Endothelial cell of umbilical vein (primary cell): ENCODE measurements at regions of chr2 and their contacts with region 1.

Region 1: GRCh38 chr2:234544659-234545611 is 48.1 kb upstream of the ARL4C start:
- DNase-seq: peak; percentile 38
- H3K4me3 ChIP-seq: no peak overlapping the region
- H3K27ac ChIP-seq: no peak overlapping the region
- H3K4me1 ChIP-seq: peaks cover 6% of the 10 kb centered on the region
- H3K27me3 ChIP-seq: peaks cover 0 to 6% of the 10 kb centered on the region in 2 experiments
- CTCF ChIP-seq: peak; percentile 71 to 96
- POLR2A ChIP-seq: no peak

Region 2: DNA sequence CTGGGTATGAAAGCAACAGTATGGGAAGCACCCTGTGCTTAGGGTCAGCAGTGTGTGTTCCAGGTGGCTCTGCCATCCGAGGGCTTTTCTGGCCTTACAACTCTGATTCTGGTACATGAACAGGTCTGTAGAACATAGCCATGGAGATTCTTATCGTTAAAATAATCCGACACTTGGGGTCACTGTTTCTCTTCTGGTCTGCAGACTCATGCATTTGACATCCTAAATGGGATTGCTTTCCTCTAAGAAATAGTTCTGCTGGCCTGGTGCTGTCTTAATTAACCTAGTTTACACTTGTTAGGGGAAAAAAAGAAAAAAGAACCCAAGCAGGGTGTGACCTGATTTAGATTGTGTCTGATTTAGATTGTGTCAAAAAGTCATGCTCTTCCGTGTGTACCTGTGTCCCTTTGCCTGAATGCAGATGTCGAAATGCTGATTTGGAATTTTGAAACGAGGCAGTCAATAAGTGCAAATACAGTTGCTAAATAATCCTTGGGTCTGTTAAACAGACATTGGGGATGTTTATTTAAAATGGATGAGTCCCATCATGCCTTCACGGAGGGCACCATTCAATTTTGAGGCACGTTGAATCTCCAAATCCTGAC is 568.1 kb before region 1 on chr2:
- CTCF ChIA-PET with region 1: interaction called, 74 read pairs
- POLR2A ChIA-PET with region 1: no interaction called
- dilution Hi-C with region 1: no loop called
- intact Hi-C with region 1: loop called (anchors 1 kb)
- DNase-seq: peak; percentile 57
- H3K4me3 ChIP-seq: no peak overlapping the region
- H3K27ac ChIP-seq: no peak overlapping the region
- H3K4me1 ChIP-seq: peaks cover 13% of the 10 kb centered on the region
- H3K27me3 ChIP-seq: peaks cover 0 to 3% of the 10 kb centered on the region in 2 experiments
- CTCF ChIP-seq: peak; percentile 4 to 22
- POLR2A ChIP-seq: no peak

Region 3: GRCh38 chr2:234003972-234004617 is 540.8 kb before region 1 on chr2:
- CTCF ChIA-PET with region 1: no interaction called
- POLR2A ChIA-PET with region 1: no interaction called
- dilution Hi-C with region 1: no loop called
- intact Hi-C with region 1: no loop called
- DNase-seq: peak; percentile 8
- H3K4me3 ChIP-seq: no peak overlapping the region
- H3K27ac ChIP-seq: no peak overlapping the region
- H3K4me1 ChIP-seq: no peaks in the 10 kb centered on the region
- H3K27me3 ChIP-seq: peaks cover 0 to 8% of the 10 kb centered on the region in 2 experiments
- CTCF ChIP-seq: no peak
- POLR2A ChIP-seq: no peak

Region 4: GRCh38 chr2:234500394-234501006 is 44.4 kb before region 1 on chr2:
- CTCF ChIA-PET with region 1: interaction called, 24 read pairs
- POLR2A ChIA-PET with region 1: no interaction called
- dilution Hi-C with region 1: no loop called
- intact Hi-C with region 1: loop called (anchors 1 kb)
- DNase-seq: peak; percentile 61
- H3K4me3 ChIP-seq: no peak overlapping the region
- H3K27ac ChIP-seq: no peak overlapping the region
- H3K4me1 ChIP-seq: peaks cover 3% of the 10 kb centered on the region
- H3K27me3 ChIP-seq: peaks cover 0 to 2% of the 10 kb centered on the region in 2 experiments
- CTCF ChIP-seq: peak; percentile 51 to 58
- POLR2A ChIP-seq: no peak

Region 5: DNA sequence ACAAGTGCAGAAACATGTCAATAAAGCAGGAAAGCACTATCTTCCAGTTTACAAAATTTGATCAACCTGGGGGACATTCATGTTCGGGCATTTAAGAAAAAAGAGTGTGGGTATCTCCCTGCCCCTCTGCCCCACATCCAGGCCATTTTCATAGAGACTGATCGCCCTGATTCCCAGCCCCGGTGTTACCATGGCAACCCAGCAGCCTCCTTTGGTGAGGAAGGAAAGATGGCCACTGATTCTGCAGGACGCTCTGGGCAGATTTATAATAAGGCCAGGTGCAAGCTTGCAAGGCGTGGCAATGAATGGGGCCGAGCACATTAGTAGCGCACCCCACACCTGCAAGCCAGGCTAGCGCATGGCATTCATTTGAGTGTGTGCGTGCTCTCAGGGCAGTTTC is 11.3 kb before region 1 on chr2:
- CTCF ChIA-PET with region 1: interaction called, 24 read pairs
- POLR2A ChIA-PET with region 1: no interaction called
- dilution Hi-C with region 1: no loop called
- intact Hi-C with region 1: no loop called
- DNase-seq: no peak
- H3K4me3 ChIP-seq: no peak overlapping the region
- H3K27ac ChIP-seq: no peak overlapping the region
- H3K4me1 ChIP-seq: no peaks in the 10 kb centered on the region
- H3K27me3 ChIP-seq: peaks cover 2 to 3% of the 10 kb centered on the region in 2 experiments
- CTCF ChIP-seq: no peak
- POLR2A ChIP-seq: no peak

Region 6: DNA sequence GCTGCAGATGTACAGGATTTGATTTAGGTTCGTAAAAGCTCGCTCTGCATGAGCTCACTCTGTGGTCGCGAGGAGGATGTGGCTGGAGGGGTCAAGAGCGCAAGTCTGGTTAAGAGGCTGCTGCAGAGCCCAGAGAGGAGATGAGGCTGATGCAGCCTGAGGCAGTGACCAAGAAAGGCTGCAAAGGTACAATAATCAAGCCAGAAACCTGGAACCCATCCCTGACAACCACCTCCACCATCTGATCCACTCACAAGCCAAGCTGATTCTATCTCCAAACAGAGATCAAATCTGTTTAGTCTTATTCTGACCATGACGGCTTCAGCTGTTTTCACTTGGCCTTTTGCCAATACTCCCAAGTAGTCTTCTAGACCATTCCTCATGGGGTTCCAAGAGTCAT is 10.8 kb after region 1 on chr2:
- CTCF ChIA-PET with region 1: interaction called, 16 read pairs
- POLR2A ChIA-PET with region 1: no interaction called
- dilution Hi-C with region 1: no loop called
- intact Hi-C with region 1: no loop called
- DNase-seq: no peak
- H3K4me3 ChIP-seq: no peak overlapping the region
- H3K27ac ChIP-seq: no peak overlapping the region
- H3K4me1 ChIP-seq: no peaks in the 10 kb centered on the region
- H3K27me3 ChIP-seq: no peaks in the 10 kb centered on the region
- CTCF ChIP-seq: no peak
- POLR2A ChIP-seq: no peak

Region 7: DNA sequence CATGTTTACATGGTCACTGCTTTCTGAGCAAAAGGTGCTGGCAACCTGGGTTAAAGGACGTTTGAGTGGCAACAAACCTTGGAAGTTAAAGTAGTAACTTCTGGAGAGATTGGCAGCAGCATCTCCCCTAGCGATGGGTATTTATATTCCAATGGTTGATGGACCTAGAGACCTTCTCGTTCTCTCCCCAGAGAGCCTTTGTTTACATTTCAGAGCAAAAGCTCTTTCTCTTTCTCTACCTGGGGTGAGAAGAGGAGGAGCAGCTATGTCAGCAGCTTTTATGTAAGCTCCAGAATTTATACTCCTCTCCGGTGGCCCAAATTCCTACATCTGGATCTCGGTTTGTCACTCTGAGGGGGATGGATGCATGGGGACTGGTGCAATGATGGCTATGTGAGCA is 165.7 kb after region 1 on chr2:
- CTCF ChIA-PET with region 1: no interaction called
- POLR2A ChIA-PET with region 1: no interaction called
- dilution Hi-C with region 1: no loop called
- intact Hi-C with region 1: no loop called
- DNase-seq: no peak
- H3K4me3 ChIP-seq: no peak overlapping the region
- H3K27ac ChIP-seq: no peak overlapping the region
- H3K4me1 ChIP-seq: no peaks in the 10 kb centered on the region
- H3K27me3 ChIP-seq: peaks cover 0 to 18% of the 10 kb centered on the region in 2 experiments
- CTCF ChIP-seq: no peak
- POLR2A ChIP-seq: no peak

Region 8: GRCh38 chr2:235098736-235099494 is 554.0 kb after region 1 on chr2:
- CTCF ChIA-PET with region 1: interaction called, 13 read pairs
- POLR2A ChIA-PET with region 1: no interaction called
- dilution Hi-C with region 1: loop called (anchors 25 kb)
- intact Hi-C with region 1: no loop called
- DNase-seq: no peak
- H3K4me3 ChIP-seq: no peak overlapping the region
- H3K27ac ChIP-seq: no peak overlapping the region
- H3K4me1 ChIP-seq: no peaks in the 10 kb centered on the region
- H3K27me3 ChIP-seq: peaks cover 0 to 3% of the 10 kb centered on the region in 2 experiments
- CTCF ChIP-seq: no peak
- POLR2A ChIP-seq: no peak